Activated B cell treated with CpG ODN at 0.5 μM for 24 hours (primary cell): ENCODE measurements at regions of chr2 and their contacts with region 1.

Region 1: DNA sequence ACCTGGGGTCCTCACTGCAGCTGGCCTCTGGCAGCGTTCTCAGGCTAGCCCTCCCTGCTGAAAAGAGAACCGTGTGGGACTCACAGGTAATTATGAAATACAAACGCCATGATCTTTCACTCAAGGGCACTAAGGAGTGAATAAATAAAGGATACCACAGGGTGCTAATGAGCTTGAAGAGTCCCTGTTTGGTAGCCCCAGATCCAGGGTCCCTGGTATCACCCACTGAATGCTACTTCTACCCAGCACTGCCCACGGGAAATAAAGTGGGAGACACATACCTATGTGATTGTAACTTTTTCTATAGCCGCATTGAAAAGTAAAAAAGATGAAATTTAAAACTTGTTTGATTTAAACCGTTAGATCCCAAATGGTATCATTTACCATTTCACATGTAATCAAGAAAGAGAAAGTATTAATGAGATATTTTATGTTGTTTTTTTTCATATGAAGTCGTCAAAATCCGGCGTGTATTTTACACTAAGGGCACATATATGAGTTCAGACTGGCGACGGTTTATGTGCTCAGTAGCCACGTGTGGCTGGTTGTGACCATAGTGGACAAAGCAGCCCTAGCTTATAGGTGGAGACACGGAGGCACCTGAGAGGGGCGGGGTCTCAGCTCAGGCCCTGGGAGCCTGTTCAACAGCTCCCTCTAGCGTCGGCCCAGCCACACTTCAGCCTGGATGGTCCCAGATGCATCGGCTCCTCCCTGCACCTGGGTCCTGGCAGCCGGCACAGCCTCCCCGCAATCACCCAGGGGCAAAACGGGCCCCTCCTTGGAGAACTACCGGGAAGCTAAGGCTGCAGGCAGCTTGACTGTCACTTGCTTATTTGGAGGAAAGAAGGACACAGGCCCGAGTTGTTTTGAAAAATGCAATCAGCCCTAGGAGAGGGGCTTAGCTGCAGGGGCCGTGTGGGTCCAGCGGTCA is 39.2 kb downstream of the ODC1 start:
- DNase-seq: peak; percentile 70
- ATAC-seq: peak; percentile 77
- H3K4me3 Mint-ChIP-seq: peak overlapping the region; percentile 73
- H3K27ac Mint-ChIP-seq: peak overlapping the region; percentile 92
- H3K4me1 Mint-ChIP-seq: peaks cover 66% of the 10 kb centered on the region
- H3K27me3 Mint-ChIP-seq: no peaks in the 10 kb centered on the region
- CTCF ChIP-seq: peak; percentile 51

Region 2: DNA sequence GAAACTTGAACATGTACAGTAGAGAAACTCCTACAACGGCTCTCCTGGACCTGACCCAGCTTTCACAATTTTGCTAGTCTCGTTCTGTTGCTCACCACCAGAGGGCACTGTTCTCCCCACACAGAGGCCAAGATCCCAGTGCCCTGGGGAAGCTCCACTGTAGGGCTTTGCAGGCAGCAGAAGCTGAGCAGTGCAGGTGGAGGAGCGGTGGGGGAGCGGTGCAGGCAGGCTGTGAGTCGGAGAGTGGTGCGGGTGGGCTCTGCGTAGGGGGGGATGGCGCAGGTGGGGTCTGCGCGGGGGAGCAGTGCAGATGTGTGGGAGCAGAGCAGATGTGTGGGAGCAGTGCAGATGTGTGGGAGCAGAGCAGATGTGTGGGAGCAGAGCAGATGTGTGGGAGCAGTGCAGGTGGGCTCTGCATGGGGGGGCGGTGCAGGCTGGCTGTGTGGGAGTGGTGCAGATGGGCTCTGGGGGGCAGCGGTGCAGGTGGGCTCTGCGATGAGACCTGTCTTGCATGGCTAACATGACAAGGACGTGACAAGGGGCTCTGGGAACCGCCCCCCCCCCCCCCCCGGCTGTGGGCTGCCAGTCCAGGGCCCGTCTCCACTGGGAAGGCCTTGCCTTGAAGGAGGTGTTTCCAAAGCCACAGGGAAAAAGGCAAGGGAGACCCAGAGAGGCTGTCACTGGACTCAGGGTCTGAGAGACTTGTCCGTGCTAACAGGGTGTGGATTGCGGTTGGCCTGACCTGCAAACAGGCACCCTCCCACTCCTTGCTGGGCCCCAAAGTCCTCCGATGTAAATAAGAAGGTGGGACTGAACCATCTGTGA is 336.0 kb before region 1 on chr2:
- CTCF ChIA-PET with region 1: interaction called, 43 read pairs
- POLR2A ChIA-PET with region 1: no interaction called
- intact Hi-C with region 1: loop called (anchors 1 kb)
- DNase-seq: peak; percentile 42
- ATAC-seq: peak; percentile 95
- H3K4me3 Mint-ChIP-seq: no peak overlapping the region
- H3K27ac Mint-ChIP-seq: no peak overlapping the region
- H3K4me1 Mint-ChIP-seq: peaks cover 4% of the 10 kb centered on the region
- H3K27me3 Mint-ChIP-seq: peaks cover 43% of the 10 kb centered on the region
- CTCF ChIP-seq: no peak

Region 3: DNA sequence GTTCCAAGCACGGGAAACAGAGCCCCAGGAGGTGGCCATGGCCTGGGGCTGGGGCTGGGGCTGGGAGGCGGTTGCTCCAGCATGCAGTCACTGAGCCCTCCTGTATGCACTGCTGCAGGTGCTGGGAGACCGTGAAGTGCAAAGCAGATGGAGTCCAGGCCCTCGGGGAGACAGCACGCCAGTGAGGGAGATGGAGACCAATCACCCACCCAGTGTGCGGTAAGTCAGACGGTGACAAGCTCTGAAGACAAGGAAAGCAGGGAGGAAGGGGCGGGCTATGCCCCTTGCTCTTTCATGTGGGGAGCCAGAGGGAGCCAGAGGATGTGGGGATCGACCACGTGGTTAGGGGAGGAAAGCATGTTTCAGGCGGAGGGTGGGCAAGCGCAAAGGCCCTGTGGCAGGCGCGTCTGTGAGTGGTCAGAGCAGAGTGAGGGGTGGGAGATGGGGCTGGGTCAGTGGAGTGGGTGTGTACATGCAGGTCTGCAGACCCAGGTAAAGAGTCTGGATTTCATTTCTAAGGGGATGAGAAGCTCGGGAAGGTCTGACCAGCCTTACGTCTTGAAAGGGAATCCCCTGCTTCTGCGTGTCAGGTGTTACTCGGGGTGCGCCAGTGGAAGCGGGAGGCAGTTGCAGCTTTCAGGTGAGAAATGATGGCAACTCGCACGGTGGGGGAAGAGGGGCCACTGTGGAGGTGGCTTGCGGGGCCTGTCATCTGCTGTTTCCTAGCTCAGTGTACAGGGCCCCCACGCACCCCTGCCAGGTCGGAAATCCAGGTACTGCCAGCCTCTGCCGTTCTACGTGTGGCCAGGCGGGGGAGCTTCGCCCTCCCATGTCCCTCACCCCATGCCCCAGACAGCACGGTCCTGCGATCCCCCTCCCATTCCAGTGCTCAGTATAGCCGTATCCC is 266.9 kb before region 1 on chr2:
- CTCF ChIA-PET with region 1: interaction called, 39 read pairs
- POLR2A ChIA-PET with region 1: interaction called, 7 read pairs
- intact Hi-C with region 1: loop called (anchors 1 kb)
- DNase-seq: peak; percentile 28
- ATAC-seq: peak; percentile 84
- H3K4me3 Mint-ChIP-seq: no peak overlapping the region
- H3K27ac Mint-ChIP-seq: no peak overlapping the region
- H3K4me1 Mint-ChIP-seq: no peaks in the 10 kb centered on the region
- H3K27me3 Mint-ChIP-seq: no peaks in the 10 kb centered on the region
- CTCF ChIP-seq: no peak

Region 4: DNA sequence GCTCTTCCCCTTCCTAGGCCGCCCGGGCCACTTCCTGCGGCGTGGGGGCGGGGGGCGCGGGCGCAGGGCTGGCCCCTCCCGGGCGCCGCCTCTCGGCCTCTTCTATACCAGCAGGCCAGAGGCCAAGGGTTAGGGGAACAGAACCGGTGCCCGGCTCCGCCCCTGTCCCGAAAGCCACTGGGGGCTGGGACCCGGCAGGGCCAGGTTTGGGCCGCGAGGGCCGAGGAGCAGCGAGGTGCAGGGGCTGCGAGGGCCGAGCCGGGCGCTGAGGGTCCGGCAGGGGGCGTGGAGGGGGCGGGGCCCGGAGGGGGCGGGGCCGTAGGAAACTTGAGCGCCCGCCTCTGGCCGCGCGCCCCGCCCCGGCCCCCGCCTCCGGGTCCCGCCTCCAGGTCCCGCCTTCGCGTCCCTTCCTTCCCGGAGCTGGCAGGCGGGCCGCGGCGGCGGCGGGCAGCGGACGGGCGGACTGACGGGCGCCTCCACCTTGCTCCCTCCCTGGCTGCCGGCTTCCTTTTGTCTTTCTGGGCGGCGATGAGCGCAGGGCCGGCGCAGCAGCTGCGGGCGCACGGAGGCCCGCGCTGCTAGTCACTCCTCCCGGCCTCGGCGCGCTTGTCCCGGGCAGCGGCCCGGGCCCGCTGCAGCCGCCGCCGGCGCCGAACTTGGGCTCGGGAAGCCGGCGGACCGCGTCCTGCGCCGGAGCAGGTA is 106.3 kb before region 1 on chr2 and contains the start of gene HPCAL1:
- CTCF ChIA-PET with region 1: interaction called, 94 read pairs
- POLR2A ChIA-PET with region 1: interaction called, 71 read pairs
- intact Hi-C with region 1: loop called (anchors 1 kb)
- DNase-seq: peak; percentile 87
- ATAC-seq: peak; percentile 84
- H3K4me3 Mint-ChIP-seq: peak within 1 kb of the TSS; percentile 96
- H3K27ac Mint-ChIP-seq: peak within 1 kb of the TSS; percentile 80
- H3K4me1 Mint-ChIP-seq: peaks cover 58% of the 10 kb centered on the region
- H3K27me3 Mint-ChIP-seq: no peaks in the 10 kb centered on the region
- CTCF ChIP-seq: no peak
- total RNA-seq, gene HPCAL1: 15.2 and 15.9 TPM in 2 replicates

Region 5: DNA sequence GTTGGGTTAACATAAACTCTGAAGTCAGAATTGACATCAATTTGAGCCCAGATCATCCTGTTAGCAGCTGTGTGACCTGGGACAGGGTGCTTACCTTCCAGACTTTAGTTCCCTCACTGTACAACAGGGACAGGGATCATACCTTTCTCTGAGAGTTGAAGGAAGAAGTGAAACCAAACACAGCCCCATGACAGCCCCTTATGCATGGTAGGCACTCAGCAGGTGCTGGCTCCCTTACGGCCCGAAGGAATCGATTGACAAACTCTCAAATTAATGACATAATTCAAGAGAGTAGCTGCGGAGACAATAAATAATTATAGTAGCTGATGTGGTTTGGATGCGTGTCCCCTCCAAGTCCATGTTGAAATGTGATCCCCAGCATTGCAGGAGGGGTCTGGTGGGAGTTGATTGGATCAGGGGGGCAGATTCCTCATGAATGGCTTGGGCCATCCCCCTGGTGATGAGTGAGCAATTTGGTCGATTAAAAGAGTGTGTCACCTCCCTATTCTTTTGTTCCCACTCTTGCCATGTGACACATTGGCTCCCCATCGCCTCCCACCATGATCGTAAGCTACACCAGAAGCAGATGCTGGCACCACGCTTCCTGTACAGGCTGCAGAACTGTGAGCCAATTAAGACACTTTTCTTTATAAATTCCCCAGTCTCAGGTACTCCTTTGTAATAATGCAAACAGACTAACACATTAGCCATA is 33.2 kb before region 1 on chr2:
- CTCF ChIA-PET with region 1: interaction called, 49 read pairs
- POLR2A ChIA-PET with region 1: interaction called, 90 read pairs
- intact Hi-C with region 1: loop called (anchors 1 kb)
- DNase-seq: no peak
- ATAC-seq: peak; percentile 74
- H3K4me3 Mint-ChIP-seq: peak overlapping the region; percentile 59
- H3K27ac Mint-ChIP-seq: peak overlapping the region; percentile 86
- H3K4me1 Mint-ChIP-seq: peaks cover 78% of the 10 kb centered on the region
- H3K27me3 Mint-ChIP-seq: no peaks in the 10 kb centered on the region
- CTCF ChIP-seq: no peak

Region 6: DNA sequence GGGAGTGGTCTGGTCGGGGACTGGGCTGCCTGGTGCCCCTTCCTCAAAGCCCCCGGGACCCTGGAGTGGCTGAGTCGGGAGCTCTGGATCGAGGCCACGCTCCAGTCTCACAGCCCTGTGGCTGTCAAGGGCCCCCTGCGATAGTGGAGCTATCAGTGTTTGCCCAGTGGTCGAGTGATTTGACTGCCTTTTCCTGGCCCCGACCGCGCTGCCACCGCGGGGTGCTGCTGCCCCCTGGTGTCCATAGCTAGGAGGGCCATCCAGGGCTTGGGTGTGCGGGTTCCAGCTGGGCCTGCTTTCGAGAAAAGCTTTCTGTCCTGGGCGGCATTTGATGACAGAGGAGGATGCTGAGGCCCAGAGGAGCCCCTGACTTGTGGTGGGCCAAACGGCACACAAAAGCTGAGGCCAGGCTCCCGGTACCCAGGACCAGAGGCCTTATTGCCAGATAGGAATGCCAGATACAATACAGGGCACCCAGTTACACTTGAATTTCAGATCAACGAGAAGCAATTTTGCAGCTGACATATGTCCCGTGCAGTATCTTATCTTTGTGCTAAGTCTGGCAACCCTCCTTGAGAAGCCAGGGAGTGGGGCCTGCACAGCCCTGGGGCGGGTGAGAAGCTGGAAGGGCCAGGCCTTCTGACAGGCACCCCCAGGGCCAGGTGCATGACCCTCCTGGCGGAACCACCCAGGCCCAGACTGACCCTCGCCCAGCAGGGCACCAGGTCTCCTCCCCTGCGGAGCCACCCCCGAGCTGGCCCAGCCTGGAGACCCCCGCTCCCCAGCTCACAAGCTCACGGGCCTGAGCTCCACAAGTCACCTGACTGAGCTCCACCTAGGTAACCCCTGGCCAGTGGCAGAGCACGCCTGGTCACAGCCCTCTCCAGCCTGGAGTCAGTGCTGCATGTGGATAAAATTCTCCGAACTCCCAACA is 26.2 kb after region 1 on chr2:
- CTCF ChIA-PET with region 1: interaction called, 100 read pairs
- POLR2A ChIA-PET with region 1: interaction called, 11 read pairs
- intact Hi-C with region 1: loop called (anchors 1 kb)
- DNase-seq: peak; percentile 78
- ATAC-seq: peak; percentile 87
- H3K4me3 Mint-ChIP-seq: no peak overlapping the region
- H3K27ac Mint-ChIP-seq: no peak overlapping the region
- H3K4me1 Mint-ChIP-seq: peaks cover 15% of the 10 kb centered on the region
- H3K27me3 Mint-ChIP-seq: peaks cover 4% of the 10 kb centered on the region
- CTCF ChIP-seq: peak; percentile 45

Region 7: DNA sequence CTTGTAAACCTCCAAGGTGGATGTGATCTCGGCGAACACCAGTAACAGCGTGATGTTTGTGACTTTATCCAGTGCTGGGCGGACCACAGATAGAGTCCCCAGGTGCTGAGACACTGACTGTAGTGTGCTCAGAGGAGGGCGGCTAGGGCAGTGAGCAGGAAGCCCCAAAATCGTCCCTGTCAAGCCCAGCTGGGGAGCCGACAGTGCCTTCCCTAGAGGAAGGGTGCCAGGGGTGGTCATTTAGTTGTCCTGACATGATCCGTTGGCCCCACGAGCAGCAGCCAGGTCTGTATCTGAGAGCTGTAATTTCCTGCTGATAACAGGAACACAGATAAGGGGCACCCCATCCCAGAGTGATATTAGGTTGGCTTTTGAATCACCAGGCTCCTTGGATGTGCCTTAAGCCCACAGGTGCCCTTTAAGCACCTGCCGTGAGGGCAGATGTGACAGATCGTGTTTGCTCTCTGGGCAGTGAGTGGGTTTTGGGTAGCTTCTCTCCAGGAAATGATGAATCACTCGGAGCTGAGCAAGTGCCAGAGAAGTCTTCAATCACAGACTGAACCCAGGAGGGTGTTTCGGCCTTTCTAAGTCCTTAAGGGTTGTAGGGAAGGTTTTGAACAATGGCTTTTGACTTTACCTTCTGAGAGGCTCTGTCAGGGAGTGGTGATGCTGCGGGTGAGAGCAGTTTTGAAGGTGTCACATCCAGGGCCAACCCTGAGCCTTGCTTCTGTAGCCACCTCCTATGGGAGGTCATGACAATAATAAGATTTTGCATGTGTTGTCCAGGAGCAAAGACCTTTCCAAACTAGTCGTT is 1345.2 kb after region 1 on chr2:
- CTCF ChIA-PET with region 1: no interaction called
- POLR2A ChIA-PET with region 1: no interaction called
- intact Hi-C with region 1: loop called (anchors 2 kb)
- DNase-seq: peak; percentile 43
- ATAC-seq: peak; percentile 54
- H3K4me3 Mint-ChIP-seq: peak overlapping the region; percentile 82
- H3K27ac Mint-ChIP-seq: peak overlapping the region; percentile 96
- H3K4me1 Mint-ChIP-seq: peaks cover 90% of the 10 kb centered on the region
- H3K27me3 Mint-ChIP-seq: no peaks in the 10 kb centered on the region
- CTCF ChIP-seq: no peak